B cell (primary cell): ENCODE measurements at regions of chr7 and their contacts with region 1.

Region 1: DNA sequence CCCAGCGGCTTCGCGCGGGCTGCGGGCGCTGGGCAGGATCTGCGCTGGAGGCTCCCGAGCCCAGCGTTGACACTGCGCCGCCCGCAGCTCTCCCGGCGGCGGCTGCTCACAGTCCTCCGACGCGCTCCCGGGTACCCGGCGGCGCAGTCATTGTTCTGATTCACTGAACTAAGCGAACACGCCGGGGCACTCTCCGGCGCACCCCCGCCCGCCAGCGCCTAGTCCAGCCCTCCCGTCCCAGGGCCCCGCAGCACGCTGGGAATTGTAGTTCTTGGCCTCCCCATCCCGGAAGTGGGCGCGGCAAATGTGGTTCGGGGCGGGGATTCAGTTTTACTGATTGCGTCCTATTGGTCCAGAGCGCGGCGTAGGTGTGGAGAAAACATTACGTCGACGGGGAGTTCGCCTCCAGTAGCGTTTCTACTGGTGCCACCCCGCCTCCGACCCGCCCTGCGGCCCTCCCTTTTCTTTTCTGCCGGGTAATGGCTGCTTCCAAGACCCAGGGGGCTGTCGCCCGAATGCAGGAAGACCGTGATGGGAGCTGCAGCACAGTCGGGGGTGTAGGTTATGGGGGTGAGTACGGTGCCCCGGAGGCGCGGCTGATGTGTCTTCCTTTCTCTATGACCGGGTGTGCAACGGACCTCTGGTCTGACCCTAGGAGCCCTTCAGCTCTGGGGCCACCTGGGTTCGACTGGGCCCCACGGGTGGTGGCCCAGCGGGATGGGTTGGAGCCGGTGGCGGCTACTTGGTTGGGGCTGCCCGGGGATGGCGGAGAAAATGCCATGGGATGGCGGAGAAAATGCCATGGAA is at the starts of genes DOCK4 and ZNF277:
- DNase-seq: peak; percentile 99
- ATAC-seq: peak; percentile 88
- H3K4me3 ChIP-seq: peak within 1 kb of the TSS; percentile 77 to 97 (median 91)
- H3K4me3 Mint-ChIP-seq: peak within 1 kb of the TSS; percentile 91
- H3K27ac ChIP-seq: peak within 1 kb of the TSS; percentile 26 to 67
- H3K27ac Mint-ChIP-seq: peak within 1 kb of the TSS; percentile 92
- H3K4me1 ChIP-seq: peaks cover 27 to 29% of the 10 kb centered on the region in 2 donors
- H3K4me1 Mint-ChIP-seq: peaks cover 44% of the 10 kb centered on the region
- H3K27me3 ChIP-seq: peaks cover 0 to 34% (median 29%) of the 10 kb centered on the region in 4 experiments
- H3K27me3 Mint-ChIP-seq: peaks cover 27% of the 10 kb centered on the region
- CTCF ChIP-seq: no peak
- total RNA-seq, gene DOCK4: 4.1 and 5.3 TPM in 2 replicates
- total RNA-seq, gene ZNF277: 18.6 and 20.4 TPM in 2 replicates

Region 2: GRCh38 chr7:112080441-112080840 is 126.0 kb before region 1 on chr7:
- CTCF ChIA-PET with region 1: no interaction called
- POLR2A ChIA-PET with region 1: no interaction called
- intact Hi-C with region 1: loop called (anchors 2 kb)
- DNase-seq: peak; percentile 68
- ATAC-seq: peak; percentile 82
- H3K4me3 ChIP-seq: peak overlapping the region in 2 of 5 experiments; percentile 2 to 40
- H3K4me3 Mint-ChIP-seq: peak overlapping the region; percentile 73
- H3K27ac ChIP-seq: peak overlapping the region in 1 of 2 donors; percentile 2
- H3K27ac Mint-ChIP-seq: peak overlapping the region; percentile 51
- H3K4me1 ChIP-seq: peaks cover 27 to 36% of the 10 kb centered on the region in 2 donors
- H3K4me1 Mint-ChIP-seq: peaks cover 44% of the 10 kb centered on the region
- H3K27me3 ChIP-seq: no peaks in the 10 kb centered on the region
- H3K27me3 Mint-ChIP-seq: no peaks in the 10 kb centered on the region
- CTCF ChIP-seq: no peak

Region 3: GRCh38 chr7:112238852-112239610 is 32.6 kb after region 1 on chr7:
- CTCF ChIA-PET with region 1: no interaction called
- POLR2A ChIA-PET with region 1: no interaction called
- intact Hi-C with region 1: no loop called
- DNase-seq: no peak
- ATAC-seq: no peak
- H3K4me3 ChIP-seq: no peak overlapping the region
- H3K4me3 Mint-ChIP-seq: no peak overlapping the region
- H3K27ac ChIP-seq: no peak overlapping the region
- H3K27ac Mint-ChIP-seq: no peak overlapping the region
- H3K4me1 ChIP-seq: no peaks in the 10 kb centered on the region
- H3K4me1 Mint-ChIP-seq: no peaks in the 10 kb centered on the region
- H3K27me3 ChIP-seq: no peaks in the 10 kb centered on the region
- H3K27me3 Mint-ChIP-seq: no peaks in the 10 kb centered on the region
- CTCF ChIP-seq: no peak

Region 4: DNA sequence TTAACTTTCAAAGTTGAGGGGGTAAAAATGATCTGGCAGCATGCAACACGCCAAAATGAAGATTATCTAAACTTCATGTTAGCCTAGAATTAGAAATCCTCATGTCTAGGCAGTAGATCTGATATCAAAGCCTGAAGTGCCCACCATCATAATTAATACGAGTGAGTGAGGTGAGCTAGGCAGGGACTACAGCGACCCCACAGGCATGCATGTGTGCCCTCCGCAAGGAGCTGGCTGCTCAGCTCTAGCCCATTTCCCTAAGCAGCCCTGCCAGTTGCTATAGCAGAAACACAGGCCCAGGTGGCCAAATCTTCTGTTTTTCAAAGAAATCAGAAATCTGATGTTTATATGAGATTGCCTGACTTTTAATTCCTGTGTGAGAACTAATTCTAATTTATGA is 150.7 kb after region 1 on chr7:
- CTCF ChIA-PET with region 1: no interaction called
- POLR2A ChIA-PET with region 1: no interaction called
- intact Hi-C with region 1: no loop called
- DNase-seq: no peak
- ATAC-seq: no peak
- H3K4me3 ChIP-seq: no peak overlapping the region
- H3K4me3 Mint-ChIP-seq: no peak overlapping the region
- H3K27ac ChIP-seq: no peak overlapping the region
- H3K27ac Mint-ChIP-seq: no peak overlapping the region
- H3K4me1 ChIP-seq: no peaks in the 10 kb centered on the region
- H3K4me1 Mint-ChIP-seq: no peaks in the 10 kb centered on the region
- H3K27me3 ChIP-seq: no peaks in the 10 kb centered on the region
- H3K27me3 Mint-ChIP-seq: peaks cover 27% of the 10 kb centered on the region
- CTCF ChIP-seq: no peak

Region 5: DNA sequence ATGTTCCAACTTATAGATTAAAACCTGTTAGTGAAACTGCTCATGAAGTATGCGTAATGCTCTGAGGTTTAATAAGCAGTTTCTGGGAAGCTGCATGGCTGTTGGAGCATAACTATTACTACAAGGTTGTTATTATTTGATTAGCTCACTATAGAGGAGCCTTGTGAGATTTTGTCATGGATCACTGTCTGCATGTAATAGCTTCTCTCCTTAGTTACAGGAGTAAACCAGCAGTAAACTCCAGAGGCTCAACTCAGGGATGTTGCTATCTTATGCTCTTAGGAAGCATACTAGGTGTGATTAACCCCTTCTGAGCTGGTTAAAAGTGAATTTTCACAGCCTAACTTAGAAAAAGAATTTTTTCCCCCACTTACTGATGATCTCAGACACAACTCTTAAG is 180.2 kb after region 1 on chr7:
- CTCF ChIA-PET with region 1: no interaction called
- POLR2A ChIA-PET with region 1: interaction called, 3 read pairs
- intact Hi-C with region 1: loop called (anchors 1 kb)
- DNase-seq: no peak
- ATAC-seq: no peak
- H3K4me3 ChIP-seq: no peak overlapping the region
- H3K4me3 Mint-ChIP-seq: no peak overlapping the region
- H3K27ac ChIP-seq: no peak overlapping the region
- H3K27ac Mint-ChIP-seq: no peak overlapping the region
- H3K4me1 ChIP-seq: no peaks in the 10 kb centered on the region
- H3K4me1 Mint-ChIP-seq: peaks cover 2% of the 10 kb centered on the region
- H3K27me3 ChIP-seq: peaks cover 0 to 5% (median 1%) of the 10 kb centered on the region in 4 experiments
- H3K27me3 Mint-ChIP-seq: peaks cover 10% of the 10 kb centered on the region
- CTCF ChIP-seq: no peak

Region 6: DNA sequence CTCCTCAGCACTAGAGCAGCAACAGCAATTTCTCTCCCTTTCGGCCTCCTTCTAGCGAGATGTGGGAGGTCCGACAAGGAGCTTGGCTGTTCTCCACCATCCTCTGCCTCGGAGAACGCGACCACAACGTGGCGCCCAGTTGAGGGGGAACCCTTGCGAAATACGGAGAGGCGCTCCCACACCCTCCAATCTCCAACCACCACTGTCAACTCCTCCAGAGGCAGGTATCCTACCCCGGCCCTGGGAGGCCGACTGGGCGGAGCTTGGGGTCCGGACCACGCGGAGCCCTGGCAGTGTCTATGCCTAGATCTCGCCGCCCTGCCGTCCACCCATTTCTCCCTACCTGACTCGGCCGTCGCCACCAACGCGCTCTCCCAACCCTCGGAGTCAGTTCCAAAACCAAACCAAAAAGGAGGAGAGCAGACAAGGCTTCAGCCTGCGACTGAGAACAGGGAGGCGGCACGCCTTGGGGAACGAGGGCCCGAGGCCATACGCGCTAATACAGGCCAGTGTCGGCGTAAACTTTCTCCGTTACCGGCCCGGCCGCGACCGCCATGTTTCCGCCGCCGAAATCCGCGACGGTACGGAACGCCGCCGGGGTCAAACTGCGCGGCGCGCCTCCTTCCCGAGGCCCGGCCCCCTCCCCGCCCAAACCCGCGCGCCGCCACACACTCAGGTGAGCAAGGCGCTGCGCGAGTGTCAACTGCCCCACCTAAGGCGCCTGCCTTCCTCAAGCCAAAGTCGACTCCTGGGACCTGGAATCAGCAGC is 583.6 kb after region 1 on chr7 and contains the start of gene TMEM168:
- CTCF ChIA-PET with region 1: no interaction called
- POLR2A ChIA-PET with region 1: no interaction called
- intact Hi-C with region 1: loop called (anchors 2 kb)
- DNase-seq: peak; percentile 92
- ATAC-seq: peak; percentile 83
- H3K4me3 ChIP-seq: peak within 1 kb of the TSS; percentile 83 to 96 (median 90)
- H3K4me3 Mint-ChIP-seq: peak within 1 kb of the TSS; percentile 92
- H3K27ac ChIP-seq: peak within 1 kb of the TSS; percentile 91 to 93
- H3K27ac Mint-ChIP-seq: peak within 1 kb of the TSS; percentile 92
- H3K4me1 ChIP-seq: peaks cover 16 to 23% of the 10 kb centered on the region in 2 donors
- H3K4me1 Mint-ChIP-seq: peaks cover 43% of the 10 kb centered on the region
- H3K27me3 ChIP-seq: no peaks in the 10 kb centered on the region
- H3K27me3 Mint-ChIP-seq: no peaks in the 10 kb centered on the region
- CTCF ChIP-seq: no peak
- total RNA-seq, gene TMEM168: 30.0 and 31.8 TPM in 2 replicates

Region 7: GRCh38 chr7:113118074-113118959 is 911.9 kb after region 1 on chr7 and contains the start of gene SMIM30:
- CTCF ChIA-PET with region 1: no interaction called
- POLR2A ChIA-PET with region 1: no interaction called
- intact Hi-C with region 1: loop called (anchors 1 kb)
- DNase-seq: peak; percentile 91
- ATAC-seq: peak; percentile 100
- H3K4me3 ChIP-seq: peak within 1 kb of the TSS; percentile 40 to 88 (median 69)
- H3K4me3 Mint-ChIP-seq: peak within 1 kb of the TSS; percentile 96
- H3K27ac ChIP-seq: peak within 1 kb of the TSS; percentile 62 to 87
- H3K27ac Mint-ChIP-seq: peak within 1 kb of the TSS; percentile 95
- H3K4me1 ChIP-seq: peaks cover 8 to 11% of the 10 kb centered on the region in 2 donors
- H3K4me1 Mint-ChIP-seq: peaks cover 23% of the 10 kb centered on the region
- H3K27me3 ChIP-seq: no peaks in the 10 kb centered on the region
- H3K27me3 Mint-ChIP-seq: no peaks in the 10 kb centered on the region
- CTCF ChIP-seq: no peak
- total RNA-seq, gene SMIM30: 21.0 and 24.4 TPM in 2 replicates